Activated CD4-positive, alpha-beta T cell treated with anti-CD3 and anti-CD28 coated beads for 36 hours (primary cell): ENCODE measurements at regions of chr9 and their contacts with region 1.

Region 1: DNA sequence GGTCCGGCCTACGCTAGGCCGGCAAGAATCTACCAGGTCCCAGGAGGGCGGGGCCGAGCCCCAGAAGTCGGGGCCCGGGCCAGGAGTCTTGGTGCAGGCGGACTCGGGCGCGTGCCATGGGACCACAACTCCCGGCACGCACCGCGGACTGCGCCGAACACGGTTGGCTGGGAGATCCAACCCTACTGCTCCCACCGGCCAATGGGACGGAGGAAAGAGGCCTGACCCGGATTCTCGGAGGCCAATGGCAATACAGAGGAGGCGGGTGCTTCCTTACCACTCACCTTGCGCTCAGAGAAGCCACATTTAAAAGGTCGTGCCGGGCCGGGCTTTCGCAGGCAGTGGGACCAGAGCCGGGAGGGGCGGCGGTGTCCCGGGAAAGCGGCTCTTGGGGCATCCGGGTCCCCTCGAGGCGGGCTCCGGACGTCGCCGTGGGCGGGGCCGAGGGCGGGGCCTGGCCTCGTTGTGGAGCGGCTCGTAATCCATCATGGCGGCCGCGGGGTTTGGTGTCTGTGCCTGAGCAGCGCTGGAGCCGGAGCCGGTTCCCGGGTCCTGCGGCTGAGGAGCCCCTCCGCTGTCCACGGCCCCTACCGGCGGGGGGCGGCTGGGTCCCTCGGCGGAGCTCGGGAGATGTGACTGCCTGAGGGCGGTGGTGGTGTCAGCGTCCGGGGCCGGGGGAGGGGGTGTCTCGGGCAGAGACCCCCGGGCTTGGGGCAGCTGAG is 19.1 kb downstream of the EXOSC2 start:
- DNase-seq: peak; percentile 98
- ATAC-seq: peak; percentile 99
- H3K4me3 Mint-ChIP-seq: peak overlapping the region; percentile 82
- H3K27ac Mint-ChIP-seq: peak overlapping the region; percentile 87
- H3K4me1 Mint-ChIP-seq: peaks cover 35% of the 10 kb centered on the region
- H3K27me3 Mint-ChIP-seq: no peaks in the 10 kb centered on the region

Region 2: DNA sequence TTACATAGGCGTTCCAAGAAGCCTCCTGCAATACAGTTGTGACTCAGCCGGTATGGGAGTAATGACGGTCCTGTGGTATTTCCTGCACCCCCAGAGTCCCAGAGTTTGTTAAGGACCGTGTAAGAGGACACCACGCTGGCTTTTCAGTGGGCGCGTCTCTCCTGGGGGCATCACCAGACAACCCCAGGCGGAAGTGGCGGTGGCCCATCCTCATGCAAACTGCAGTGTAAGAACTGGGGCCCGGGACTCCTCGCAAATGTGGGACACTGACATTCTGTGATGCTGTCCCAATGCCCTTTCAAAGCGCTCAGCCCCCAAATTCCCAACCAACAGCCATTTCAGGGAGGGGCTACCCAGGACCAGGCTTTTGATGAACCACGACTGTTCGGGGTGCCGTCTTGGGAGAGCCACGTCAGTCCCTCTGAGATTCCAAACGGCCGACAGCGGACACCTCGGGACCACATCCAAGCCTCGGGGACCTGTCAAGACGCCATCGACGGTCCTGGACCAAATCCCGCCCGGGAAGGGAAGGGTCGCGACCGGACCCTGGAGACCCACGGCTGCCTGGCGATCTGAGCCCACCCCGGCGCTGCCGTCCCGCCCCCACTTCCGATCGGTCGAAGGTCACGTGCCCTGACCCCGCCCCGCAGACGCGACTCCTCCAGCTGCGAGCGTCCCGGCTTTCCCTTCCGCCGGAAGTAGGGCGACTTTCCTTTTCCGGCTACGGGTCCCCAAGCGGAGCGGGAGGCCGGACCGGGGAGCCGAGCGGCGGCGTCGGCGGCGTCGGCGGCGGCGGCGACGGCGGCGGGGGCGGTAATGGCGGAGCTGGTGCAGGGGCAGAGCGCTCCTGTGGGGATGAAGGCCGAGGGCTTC is 133.6 kb before region 1 on chr9 and contains the start of gene FUBP3:
- CTCF ChIA-PET with region 1: no interaction called
- POLR2A ChIA-PET with region 1: interaction called, 4 read pairs
- intact Hi-C with region 1: loop called in 1 of 2 experiments (anchors 1 kb)
- DNase-seq: peak; percentile 96
- ATAC-seq: peak; percentile 94
- H3K4me3 Mint-ChIP-seq: peak within 1 kb of the TSS; percentile 90
- H3K27ac Mint-ChIP-seq: peak within 1 kb of the TSS; percentile 89
- H3K4me1 Mint-ChIP-seq: peaks cover 32% of the 10 kb centered on the region
- H3K27me3 Mint-ChIP-seq: no peaks in the 10 kb centered on the region
- total RNA-seq, gene FUBP3: 36.4 to 38.5 TPM

Region 3: DNA sequence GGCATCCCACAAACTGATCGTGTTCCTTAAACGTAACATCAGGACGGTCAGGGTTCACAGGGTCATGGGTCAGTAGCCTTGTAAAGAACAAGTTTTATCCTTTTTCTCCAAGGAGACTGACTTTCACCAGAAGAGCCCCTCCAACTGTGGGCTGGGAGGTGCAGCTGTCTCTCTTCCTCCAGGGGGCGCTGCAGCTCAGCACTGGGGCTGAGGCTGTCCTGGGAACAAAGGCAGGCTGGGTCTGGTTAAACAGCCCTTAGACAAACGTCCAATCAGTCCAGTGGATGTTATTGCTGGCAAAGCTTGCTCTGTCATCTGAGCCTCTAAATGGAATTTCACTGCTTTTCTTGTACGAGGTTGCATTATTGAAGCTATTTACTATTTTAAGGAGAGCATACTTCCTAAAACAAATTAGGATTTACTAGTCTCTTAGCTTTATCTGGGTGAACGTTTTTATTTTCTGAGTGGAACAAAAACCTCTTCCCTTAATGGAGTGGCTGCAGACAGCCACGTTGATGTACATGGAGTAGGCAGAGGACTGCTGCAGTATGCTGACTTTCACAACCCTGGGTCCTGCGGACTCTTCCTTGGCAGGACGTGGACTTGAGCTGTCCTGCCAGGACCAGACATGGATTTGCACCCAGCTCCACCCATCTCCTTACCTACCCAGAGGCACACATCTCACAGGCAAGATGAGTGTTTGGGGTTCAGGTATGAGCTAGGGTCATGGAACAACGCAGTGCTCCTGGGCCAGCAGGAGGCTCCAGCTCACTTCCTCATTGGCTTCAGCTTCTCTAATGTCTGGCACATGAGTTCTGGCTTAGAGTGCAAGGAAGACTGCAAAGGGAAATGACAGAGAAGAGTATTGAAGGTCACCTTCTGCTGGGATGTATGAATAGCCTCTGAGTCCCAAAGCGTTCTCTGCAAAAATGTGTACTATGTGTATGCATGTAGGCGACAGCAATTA is 11.4 kb before region 1 on chr9:
- CTCF ChIA-PET with region 1: interaction called, 17 read pairs
- POLR2A ChIA-PET with region 1: interaction called, 4 read pairs
- intact Hi-C with region 1: no loop called
- DNase-seq: peak; percentile 87
- ATAC-seq: peak; percentile 93
- H3K4me3 Mint-ChIP-seq: no peak overlapping the region
- H3K27ac Mint-ChIP-seq: no peak overlapping the region
- H3K4me1 Mint-ChIP-seq: peaks cover 22% of the 10 kb centered on the region
- H3K27me3 Mint-ChIP-seq: no peaks in the 10 kb centered on the region

Region 4: GRCh38 chr9:130732793-130733221 is 20.1 kb after region 1 on chr9:
- CTCF ChIA-PET with region 1: no interaction called
- POLR2A ChIA-PET with region 1: no interaction called
- intact Hi-C with region 1: no loop called
- DNase-seq: no peak
- ATAC-seq: no peak
- H3K4me3 Mint-ChIP-seq: no peak overlapping the region
- H3K27ac Mint-ChIP-seq: no peak overlapping the region
- H3K4me1 Mint-ChIP-seq: peaks cover 23% of the 10 kb centered on the region
- H3K27me3 Mint-ChIP-seq: no peaks in the 10 kb centered on the region

Region 5: GRCh38 chr9:130815242-130815808 is 102.6 kb after region 1 on chr9:
- CTCF ChIA-PET with region 1: no interaction called
- POLR2A ChIA-PET with region 1: interaction called, 3 read pairs
- intact Hi-C with region 1: loop called in 1 of 2 experiments (anchors 1 kb)
- DNase-seq: no peak
- ATAC-seq: no peak
- H3K4me3 Mint-ChIP-seq: no peak overlapping the region
- H3K27ac Mint-ChIP-seq: no peak overlapping the region
- H3K4me1 Mint-ChIP-seq: peaks cover 12% of the 10 kb centered on the region
- H3K27me3 Mint-ChIP-seq: no peaks in the 10 kb centered on the region

Region 6: GRCh38 chr9:130940693-130941576 is 228.2 kb after region 1 on chr9:
- CTCF ChIA-PET with region 1: interaction called, 7 read pairs
- POLR2A ChIA-PET with region 1: no interaction called
- intact Hi-C with region 1: loop called (anchors 2 kb)
- DNase-seq: peak; percentile 88
- ATAC-seq: peak; percentile 86
- H3K4me3 Mint-ChIP-seq: no peak overlapping the region
- H3K27ac Mint-ChIP-seq: no peak overlapping the region
- H3K4me1 Mint-ChIP-seq: peaks cover 9% of the 10 kb centered on the region
- H3K27me3 Mint-ChIP-seq: peaks cover 38% of the 10 kb centered on the region

Region 7: GRCh38 chr9:131685753-131686706 is 973.3 kb after region 1 on chr9:
- CTCF ChIA-PET with region 1: no interaction called
- POLR2A ChIA-PET with region 1: no interaction called
- intact Hi-C with region 1: no loop called
- DNase-seq: no peak
- ATAC-seq: no peak
- H3K4me3 Mint-ChIP-seq: no peak overlapping the region
- H3K27ac Mint-ChIP-seq: no peak overlapping the region
- H3K4me1 Mint-ChIP-seq: peaks cover 70% of the 10 kb centered on the region
- H3K27me3 Mint-ChIP-seq: no peaks in the 10 kb centered on the region